ENCODE measurements at regions of chrX and their contacts with region 1.

Region 1: DNA sequence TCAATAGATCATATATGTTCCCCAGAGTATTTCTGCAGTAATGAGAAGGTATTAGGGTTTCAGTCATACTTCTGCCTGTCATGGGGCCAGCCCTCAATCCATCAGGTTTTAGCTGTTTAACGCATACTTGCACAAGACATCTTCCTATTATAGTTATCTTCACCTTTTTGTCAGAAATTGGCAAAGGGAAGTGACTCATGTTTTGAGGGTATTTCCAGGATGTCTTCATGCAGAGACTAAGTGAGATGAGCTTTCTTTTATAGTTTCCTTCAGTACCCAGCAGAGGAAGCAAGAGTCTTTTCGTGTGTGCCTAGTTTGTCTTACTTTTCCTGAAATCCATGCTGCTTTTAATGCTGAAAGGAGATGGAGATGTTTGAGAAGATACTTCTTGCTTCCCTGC is 9.5 kb downstream of the CSTF2 start:
- DNase-seq: peak; percentile 38
- H3K4me3 Mint-ChIP-seq: peak overlapping the region; percentile 59
- H3K27ac Mint-ChIP-seq: peak overlapping the region; percentile 98
- H3K4me1 Mint-ChIP-seq: peaks cover 29% of the 10 kb centered on the region
- H3K27me3 Mint-ChIP-seq: no peaks in the 10 kb centered on the region

Region 2: DNA sequence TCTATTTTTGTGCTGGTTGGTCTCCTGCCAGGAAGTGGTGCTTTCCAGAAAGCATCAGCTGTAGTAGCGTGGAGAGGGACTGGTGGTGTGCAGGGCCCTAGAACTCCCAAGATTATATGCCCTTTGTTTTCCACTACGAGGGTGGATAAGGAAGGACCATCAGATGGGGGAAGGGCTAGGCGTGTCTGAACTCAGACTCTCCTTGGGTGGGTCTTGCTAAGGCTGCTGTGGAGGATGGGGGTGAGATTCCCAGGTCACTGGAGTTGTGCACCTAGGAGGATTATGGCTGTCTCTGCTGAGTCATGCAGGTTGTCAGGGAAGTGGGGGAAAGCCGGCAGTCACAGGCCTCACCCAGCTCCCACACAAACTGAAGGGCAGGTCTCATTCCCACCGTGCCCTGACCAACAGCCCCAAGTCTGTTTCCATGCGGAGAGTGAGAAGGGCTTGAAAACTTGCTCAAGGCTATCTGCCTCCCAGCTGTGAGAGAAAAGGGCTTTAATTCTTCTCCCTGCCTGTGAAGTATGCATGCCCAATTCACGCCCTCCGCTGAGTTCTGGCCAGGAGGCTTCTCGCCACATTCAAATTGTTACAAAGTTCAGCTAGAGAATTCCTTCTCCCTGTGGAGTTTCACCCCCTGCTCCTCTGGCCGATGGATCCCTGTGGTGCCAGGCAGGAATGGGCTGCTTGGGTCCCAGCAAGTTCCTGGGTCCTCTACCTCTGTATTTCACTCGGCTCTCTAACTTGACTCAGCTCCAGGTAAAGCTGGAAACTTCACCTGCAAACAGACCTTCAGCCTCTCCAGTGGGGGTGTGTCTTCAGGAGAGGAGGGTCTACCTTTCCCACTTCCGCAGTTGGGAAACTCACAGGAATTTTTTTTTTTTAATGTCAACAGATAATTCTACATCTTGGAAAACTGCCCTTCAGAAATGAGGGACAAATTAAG is 17.2 kb before region 1 on chrX:
- CTCF ChIA-PET with region 1: no interaction called
- POLR2A ChIA-PET with region 1: no interaction called
- intact Hi-C with region 1: no loop called
- DNase-seq: no peak
- H3K4me3 Mint-ChIP-seq: no peak overlapping the region
- H3K27ac Mint-ChIP-seq: no peak overlapping the region
- H3K4me1 Mint-ChIP-seq: no peaks in the 10 kb centered on the region
- H3K27me3 Mint-ChIP-seq: peaks cover 20% of the 10 kb centered on the region

Region 3: GRCh38 chrX:100924375-100924774 is 94.6 kb after region 1 on chrX:
- CTCF ChIA-PET with region 1: no interaction called
- POLR2A ChIA-PET with region 1: no interaction called
- intact Hi-C with region 1: loop called (anchors 2 kb)
- DNase-seq: no peak
- H3K4me3 Mint-ChIP-seq: no peak overlapping the region
- H3K27ac Mint-ChIP-seq: no peak overlapping the region
- H3K4me1 Mint-ChIP-seq: peaks cover under 1% of the 10 kb centered on the region
- H3K27me3 Mint-ChIP-seq: no peaks in the 10 kb centered on the region

Region 4: DNA sequence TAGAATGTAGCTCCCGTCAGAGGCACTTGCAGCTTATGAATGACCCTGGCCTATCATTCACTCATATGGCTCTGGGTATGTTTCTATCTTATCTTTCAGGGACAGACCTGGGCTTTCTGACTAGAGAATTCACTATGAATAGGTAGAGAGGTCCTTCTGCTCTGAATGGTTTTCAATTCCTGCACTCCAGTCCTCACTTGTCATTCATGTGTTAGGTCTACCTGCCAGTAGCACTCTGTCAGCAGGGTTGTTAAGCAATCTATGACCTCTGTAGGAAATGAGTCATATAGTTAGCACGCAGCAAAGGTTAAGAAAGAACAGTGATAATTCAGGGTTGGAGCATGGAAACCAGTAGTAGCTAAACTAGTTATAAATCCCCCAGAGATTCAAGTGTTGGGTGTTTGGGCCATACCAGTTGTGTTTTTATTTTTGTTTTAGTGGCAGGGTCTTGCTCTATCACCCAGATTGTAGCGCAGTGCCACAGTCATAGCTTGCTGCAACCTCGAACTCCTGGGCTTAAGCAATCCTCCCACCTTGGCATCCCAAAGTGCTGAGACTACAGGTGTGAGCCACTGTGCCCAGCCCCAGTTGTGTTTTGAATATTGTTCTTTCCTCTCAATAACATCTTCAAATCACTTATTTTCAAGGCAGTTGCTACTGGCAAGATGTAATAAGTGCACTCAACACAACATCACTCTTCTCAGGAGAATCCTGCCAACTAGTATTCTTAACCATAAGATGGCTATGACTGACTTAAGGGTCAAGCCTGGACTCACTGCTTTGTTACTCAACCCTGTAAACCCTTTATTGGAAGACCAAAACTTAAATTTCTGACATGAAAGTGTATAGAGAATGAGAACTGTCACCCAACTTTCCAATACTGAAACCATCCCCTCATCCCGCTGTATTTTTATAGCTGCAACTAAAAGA is 164.9 kb after region 1 on chrX:
- CTCF ChIA-PET with region 1: no interaction called
- POLR2A ChIA-PET with region 1: no interaction called
- intact Hi-C with region 1: loop called (anchors 2 kb)
- DNase-seq: peak; percentile 27
- H3K4me3 Mint-ChIP-seq: no peak overlapping the region
- H3K27ac Mint-ChIP-seq: peak overlapping the region; percentile 76
- H3K4me1 Mint-ChIP-seq: peaks cover 24% of the 10 kb centered on the region
- H3K27me3 Mint-ChIP-seq: no peaks in the 10 kb centered on the region

Region 5: GRCh38 chrX:101025126-101025525 is 195.4 kb after region 1 on chrX:
- CTCF ChIA-PET with region 1: no interaction called
- POLR2A ChIA-PET with region 1: no interaction called
- intact Hi-C with region 1: no loop called
- DNase-seq: no peak
- H3K4me3 Mint-ChIP-seq: no peak overlapping the region
- H3K27ac Mint-ChIP-seq: no peak overlapping the region
- H3K4me1 Mint-ChIP-seq: peaks cover 3% of the 10 kb centered on the region
- H3K27me3 Mint-ChIP-seq: no peaks in the 10 kb centered on the region

Region 6: DNA sequence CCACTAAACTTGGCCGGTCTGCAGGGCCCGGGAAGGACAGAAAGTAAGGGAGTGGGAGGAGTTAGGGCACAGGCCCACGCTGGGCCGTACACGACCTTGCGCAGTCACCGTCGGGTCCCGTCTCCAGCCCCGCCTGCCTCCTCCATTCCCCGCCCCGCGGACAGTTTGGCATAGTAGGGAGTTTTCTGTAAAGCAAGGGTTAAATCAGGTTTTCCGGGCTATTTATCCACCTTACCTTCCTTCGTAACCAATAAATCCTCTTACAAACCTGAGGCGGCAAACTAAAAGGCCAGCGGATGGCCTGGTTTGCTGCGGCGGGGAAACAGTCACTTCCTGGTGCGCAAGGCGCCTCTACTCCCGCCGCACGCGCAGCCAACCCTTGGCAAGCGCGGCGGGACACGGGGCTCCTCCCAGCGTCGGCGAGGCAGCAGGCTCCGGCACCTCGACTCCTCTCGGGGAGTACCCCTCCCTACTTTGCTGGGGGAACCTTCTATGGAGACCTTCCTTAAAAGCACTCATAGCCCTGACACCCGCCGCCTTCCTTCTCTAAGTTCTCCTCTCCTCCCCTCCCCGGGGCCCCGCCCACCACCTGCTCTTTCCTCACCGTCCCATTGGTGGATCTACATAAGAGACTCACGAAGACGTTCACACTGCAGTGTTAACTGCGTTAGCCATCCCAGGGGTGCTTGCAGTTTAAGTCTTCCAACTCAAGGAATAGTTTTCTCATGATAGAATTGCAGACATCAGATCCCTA is 222.0 kb after region 1 on chrX and contains the start of gene TRMT2B:
- CTCF ChIA-PET with region 1: no interaction called
- POLR2A ChIA-PET with region 1: no interaction called
- intact Hi-C with region 1: loop called (anchors 5 kb)
- DNase-seq: peak; percentile 87
- H3K4me3 Mint-ChIP-seq: peak within 1 kb of the TSS; percentile 86
- H3K27ac Mint-ChIP-seq: peak within 1 kb of the TSS; percentile 96
- H3K4me1 Mint-ChIP-seq: peaks cover 19% of the 10 kb centered on the region
- H3K27me3 Mint-ChIP-seq: no peaks in the 10 kb centered on the region
- total RNA-seq, gene TRMT2B: 19.6 to 21.2 TPM

Region 7: DNA sequence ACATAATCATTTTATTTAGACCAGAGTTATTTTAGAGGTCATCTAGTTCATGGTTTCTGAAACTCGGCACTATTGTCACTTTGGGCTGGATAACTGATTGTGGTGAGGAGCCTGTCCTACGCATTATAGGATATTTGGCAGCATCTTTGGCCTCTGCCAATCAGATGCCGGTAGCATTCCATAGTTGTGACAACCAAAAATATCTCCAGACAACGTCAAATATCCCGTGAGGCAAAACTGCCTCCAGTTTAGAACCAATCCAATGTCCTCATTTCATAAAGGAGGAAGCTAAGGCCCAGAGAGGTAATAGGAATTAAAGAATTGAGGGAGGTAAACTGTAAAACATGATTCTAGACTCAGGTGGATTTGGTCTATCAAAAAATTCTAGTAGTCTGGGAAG is 1096.0 kb after region 1 on chrX:
- CTCF ChIA-PET with region 1: no interaction called
- POLR2A ChIA-PET with region 1: no interaction called
- intact Hi-C with region 1: loop called (anchors 5 kb)
- DNase-seq: no peak
- H3K4me3 Mint-ChIP-seq: no peak overlapping the region
- H3K27ac Mint-ChIP-seq: no peak overlapping the region
- H3K4me1 Mint-ChIP-seq: no peaks in the 10 kb centered on the region
- H3K27me3 Mint-ChIP-seq: no peaks in the 10 kb centered on the region

Measured in activated CD4-positive, alpha-beta memory T cell treated with anti-CD3 and anti-CD28 coated beads for 36 hours (primary cell).